GM12878 (cell line): ENCODE measurements at regions of chr3 and their contacts with region 1.

Region 1: DNA sequence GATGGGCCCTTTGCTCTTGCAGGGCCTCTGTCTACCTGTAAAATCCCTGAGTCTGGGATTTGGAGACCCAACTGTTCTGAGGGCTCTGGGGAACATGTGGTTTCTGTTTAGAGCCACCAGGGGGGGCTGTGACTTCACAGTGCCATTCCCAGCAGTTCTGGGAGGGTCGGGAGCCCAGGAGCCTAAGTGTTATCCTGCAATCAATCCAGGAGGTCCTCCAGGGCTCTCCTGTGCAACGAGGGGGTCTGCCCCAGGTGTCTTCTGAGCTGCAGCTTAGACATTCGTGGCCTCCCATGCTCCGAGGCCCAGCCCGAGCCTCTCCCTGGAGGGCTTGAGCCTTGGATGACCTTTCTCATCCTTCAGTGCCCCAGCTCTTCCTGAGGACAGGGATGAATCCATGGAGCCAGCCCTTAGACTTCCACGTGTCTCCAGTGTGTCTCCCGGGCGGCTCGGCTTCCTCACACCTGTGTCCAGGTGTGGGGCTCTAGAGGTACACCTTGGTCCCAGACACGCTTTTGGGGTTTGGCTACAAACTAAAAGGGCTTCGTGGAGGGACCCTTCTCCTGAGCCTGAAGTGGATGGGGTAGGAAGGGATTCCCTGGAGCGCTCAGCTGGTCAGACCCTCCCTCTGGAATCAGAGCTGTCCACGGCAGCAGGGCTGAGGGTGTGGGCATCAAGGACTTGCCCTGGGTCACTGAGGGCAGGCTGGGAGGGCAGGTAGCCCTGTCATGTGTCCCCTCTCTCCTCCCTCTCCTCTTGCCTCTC is 20.3 kb upstream of the ABTB1 start:
- DNase-seq: no peak
- ATAC-seq: peak; percentile 94
- H3K4me3 ChIP-seq: no peak overlapping the region
- H3K27ac ChIP-seq: no peak overlapping the region
- H3K4me1 ChIP-seq: peaks cover 6% of the 10 kb centered on the region; the same call in 1 of the 2 replicates
- H3K27me3 ChIP-seq: no peaks in the 10 kb centered on the region; a peak in 1 of 4 replicates
- CTCF ChIP-seq: peak; percentile 72 to 91 (median 80)
- EP300 ChIP-seq: no peak
- POLR2A ChIP-seq: no peak
- RAD21 ChIP-seq: peak; percentile 97

Region 2: GRCh38 chr3:127637546-127637945 is 14.9 kb before region 1 on chr3:
- CTCF ChIA-PET with region 1: interaction called, 11 read pairs
- POLR2A ChIA-PET with region 1: no interaction called
- RAD21 ChIA-PET with region 1: interaction called, 4 read pairs
- SMC1A ChIA-PET with region 1: interaction called, 7 read pairs
- in situ Hi-C with region 1: no loop called
- intact Hi-C with region 1: no loop called
- DNase-seq: no peak
- ATAC-seq: peak; percentile 69
- H3K4me3 ChIP-seq: no peak overlapping the region
- H3K27ac ChIP-seq: no peak overlapping the region
- H3K4me1 ChIP-seq: no peaks in the 10 kb centered on the region
- H3K27me3 ChIP-seq: no peaks in the 10 kb centered on the region
- CTCF ChIP-seq: no peak
- EP300 ChIP-seq: no peak
- POLR2A ChIP-seq: no peak
- RAD21 ChIP-seq: no peak

Region 3: DNA sequence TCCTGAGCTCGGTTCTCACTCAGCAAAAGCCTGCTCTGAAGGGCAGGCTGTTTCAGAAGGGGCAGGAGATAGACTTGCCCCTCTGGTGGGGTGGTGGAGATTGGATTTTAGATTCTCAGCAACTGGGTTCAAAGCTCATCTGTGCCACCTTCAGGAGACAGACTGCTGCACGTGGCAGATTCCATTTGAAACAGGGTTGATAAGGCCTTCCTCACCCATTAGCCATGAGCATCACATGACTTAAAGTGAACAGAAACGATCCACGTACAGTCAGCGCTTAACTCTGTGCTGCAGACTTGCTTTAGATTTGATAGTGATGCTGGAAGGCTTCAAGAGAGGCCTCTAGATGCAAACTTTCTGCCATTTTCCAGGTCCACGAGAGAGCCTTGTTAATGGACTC is 204.9 kb after region 1 on chr3:
- CTCF ChIA-PET with region 1: interaction called, 6 read pairs
- POLR2A ChIA-PET with region 1: no interaction called
- RAD21 ChIA-PET with region 1: interaction called, 4 read pairs
- SMC1A ChIA-PET with region 1: interaction called, 4 read pairs
- in situ Hi-C with region 1: no loop called
- intact Hi-C with region 1: loop called (anchors 1 kb)
- DNase-seq: no peak
- ATAC-seq: peak; percentile 91
- H3K4me3 ChIP-seq: no peak overlapping the region
- H3K27ac ChIP-seq: no peak overlapping the region
- H3K4me1 ChIP-seq: no peaks in the 10 kb centered on the region
- H3K27me3 ChIP-seq: no peaks in the 10 kb centered on the region
- CTCF ChIP-seq: peak; percentile 33 to 55 (median 33); a peak in 4 of 6 replicates
- EP300 ChIP-seq: no peak
- POLR2A ChIP-seq: no peak
- RAD21 ChIP-seq: peak; percentile 54

Region 4: GRCh38 chr3:127970966-127971592 is 318.7 kb after region 1 on chr3:
- CTCF ChIA-PET with region 1: interaction called, 39 read pairs
- POLR2A ChIA-PET with region 1: no interaction called
- RAD21 ChIA-PET with region 1: interaction called, 8 read pairs
- SMC1A ChIA-PET with region 1: interaction called, 19 read pairs
- in situ Hi-C with region 1: no loop called
- intact Hi-C with region 1: loop called (anchors 1 kb)
- DNase-seq: peak; percentile 26
- ATAC-seq: peak; percentile 98
- H3K4me3 ChIP-seq: no peak overlapping the region
- H3K27ac ChIP-seq: no peak overlapping the region
- H3K4me1 ChIP-seq: no peaks in the 10 kb centered on the region
- H3K27me3 ChIP-seq: no peaks in the 10 kb centered on the region
- CTCF ChIP-seq: peak; percentile 72 to 93 (median 75); a peak in 5 of 6 replicates
- EP300 ChIP-seq: no peak
- POLR2A ChIP-seq: no peak
- RAD21 ChIP-seq: peak; percentile 94